ENCODE measurements at regions of chr22 and their contacts with region 1.

Region 1: DNA sequence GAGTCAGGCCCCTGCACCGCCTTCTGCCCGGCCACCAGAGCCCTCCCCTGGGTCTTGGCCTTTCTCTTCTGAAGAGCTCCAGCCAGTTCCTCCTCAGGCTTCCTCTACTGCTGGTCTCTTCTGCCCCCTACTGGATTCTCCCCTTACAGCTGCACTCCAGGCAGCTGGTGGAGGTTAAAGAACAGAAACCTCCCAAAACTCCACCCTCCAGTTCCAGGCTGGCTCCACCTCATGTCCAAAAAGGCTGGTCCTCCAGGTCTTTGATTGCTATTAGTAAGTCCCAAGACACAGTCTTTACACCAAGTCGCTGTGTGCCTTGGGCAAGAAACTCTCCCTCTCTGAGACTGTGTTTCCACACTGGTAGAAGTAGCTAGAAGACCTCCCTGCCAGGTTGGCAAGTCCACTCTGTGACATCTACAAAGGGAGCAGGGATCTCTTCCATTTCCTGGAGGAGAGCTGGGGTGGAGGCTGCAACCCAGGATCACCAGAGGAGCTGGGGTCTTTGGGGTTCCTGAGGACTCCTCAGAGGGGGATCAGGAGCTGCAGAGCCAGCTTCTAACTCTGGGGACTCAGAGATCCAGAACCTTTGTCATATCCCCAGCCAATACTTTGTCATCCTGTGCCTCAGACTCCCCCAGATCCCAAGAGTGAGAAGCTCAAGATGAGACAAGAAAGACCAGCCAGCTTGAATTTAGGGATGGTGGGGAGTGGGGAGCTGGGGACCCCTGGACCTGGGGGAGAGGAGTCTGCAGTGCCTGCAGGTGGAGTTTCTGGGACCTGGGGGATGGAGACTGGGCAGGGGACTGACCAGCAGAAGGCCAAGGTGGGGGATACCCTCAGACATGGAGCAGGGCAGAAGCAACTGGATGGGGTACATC is 3.4 kb upstream of the IGLL5 start:
- DNase-seq: peak; percentile 83
- ATAC-seq: peak; percentile 72
- H3K4me3 Mint-ChIP-seq: no peak overlapping the region
- H3K27ac Mint-ChIP-seq: no peak overlapping the region
- H3K4me1 Mint-ChIP-seq: peaks cover 18% of the 10 kb centered on the region
- H3K27me3 Mint-ChIP-seq: peaks cover 15% of the 10 kb centered on the region
- CTCF ChIP-seq: peak; percentile 78

Region 2: GRCh38 chr22:22748297-22748743 is 135.9 kb before region 1 on chr22:
- CTCF ChIA-PET with region 1: interaction called, 38 read pairs
- POLR2A ChIA-PET with region 1: no interaction called
- intact Hi-C with region 1: loop called (anchors 5 kb)
- DNase-seq: peak; percentile 70
- ATAC-seq: peak; percentile 87
- H3K4me3 Mint-ChIP-seq: no peak overlapping the region
- H3K27ac Mint-ChIP-seq: no peak overlapping the region
- H3K4me1 Mint-ChIP-seq: peaks cover 19% of the 10 kb centered on the region
- H3K27me3 Mint-ChIP-seq: no peaks in the 10 kb centered on the region
- CTCF ChIP-seq: peak; percentile 84

Region 3: DNA sequence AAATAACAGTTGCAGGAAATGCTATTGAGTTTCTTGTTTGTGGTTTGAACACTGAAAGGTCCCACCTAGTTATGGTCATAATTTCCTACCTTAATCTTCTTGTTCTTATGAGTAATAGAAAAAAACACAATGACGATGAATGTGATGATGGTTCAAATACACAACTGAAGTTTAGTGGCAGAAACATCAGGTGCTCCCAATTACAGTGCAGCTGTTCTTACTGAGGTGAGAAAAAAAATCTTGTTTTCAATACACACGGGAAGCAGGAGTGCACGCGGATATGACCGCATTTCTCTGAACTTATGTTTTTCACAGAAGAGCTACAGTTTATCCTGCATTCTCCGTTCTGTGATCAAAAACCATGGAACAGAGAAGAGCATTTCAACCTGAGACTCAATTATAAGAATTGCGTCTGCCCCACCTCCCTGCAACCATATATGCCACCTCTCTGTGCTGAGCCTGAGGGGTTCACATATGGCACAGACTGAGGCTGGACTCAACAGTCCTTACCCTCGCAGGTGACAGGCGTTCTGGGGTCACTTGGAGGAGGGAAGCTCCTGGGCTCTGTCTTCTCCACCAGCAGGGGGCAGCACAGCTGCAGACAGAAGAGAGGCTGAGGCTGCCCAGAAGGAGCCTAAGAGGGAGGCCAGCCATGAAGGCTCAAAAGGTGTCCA is 96.3 kb before region 1 on chr22:
- CTCF ChIA-PET with region 1: interaction called, 72 read pairs
- POLR2A ChIA-PET with region 1: no interaction called
- intact Hi-C with region 1: no loop called
- DNase-seq: peak; percentile 81
- ATAC-seq: peak; percentile 84
- H3K4me3 Mint-ChIP-seq: no peak overlapping the region
- H3K27ac Mint-ChIP-seq: peak overlapping the region; percentile 46
- H3K4me1 Mint-ChIP-seq: peaks cover 34% of the 10 kb centered on the region
- H3K27me3 Mint-ChIP-seq: no peaks in the 10 kb centered on the region
- CTCF ChIP-seq: peak; percentile 89

Region 4: GRCh38 chr22:22818861-22819855 is 65.1 kb before region 1 on chr22:
- CTCF ChIA-PET with region 1: interaction called, 17 read pairs
- POLR2A ChIA-PET with region 1: no interaction called
- intact Hi-C with region 1: no loop called
- DNase-seq: peak; percentile 56
- ATAC-seq: peak; percentile 69
- H3K4me3 Mint-ChIP-seq: no peak overlapping the region
- H3K27ac Mint-ChIP-seq: peak overlapping the region; percentile 70
- H3K4me1 Mint-ChIP-seq: peaks cover 92% of the 10 kb centered on the region
- H3K27me3 Mint-ChIP-seq: no peaks in the 10 kb centered on the region
- CTCF ChIP-seq: no peak

Region 5: GRCh38 chr22:22848364-22848866 is 35.8 kb before region 1 on chr22:
- CTCF ChIA-PET with region 1: interaction called, 122 read pairs
- POLR2A ChIA-PET with region 1: no interaction called
- intact Hi-C with region 1: loop called (anchors 5 kb)
- DNase-seq: peak; percentile 82
- ATAC-seq: peak; percentile 93
- H3K4me3 Mint-ChIP-seq: no peak overlapping the region
- H3K27ac Mint-ChIP-seq: no peak overlapping the region
- H3K4me1 Mint-ChIP-seq: peaks cover 32% of the 10 kb centered on the region
- H3K27me3 Mint-ChIP-seq: no peaks in the 10 kb centered on the region
- CTCF ChIP-seq: peak; percentile 97

Region 6: DNA sequence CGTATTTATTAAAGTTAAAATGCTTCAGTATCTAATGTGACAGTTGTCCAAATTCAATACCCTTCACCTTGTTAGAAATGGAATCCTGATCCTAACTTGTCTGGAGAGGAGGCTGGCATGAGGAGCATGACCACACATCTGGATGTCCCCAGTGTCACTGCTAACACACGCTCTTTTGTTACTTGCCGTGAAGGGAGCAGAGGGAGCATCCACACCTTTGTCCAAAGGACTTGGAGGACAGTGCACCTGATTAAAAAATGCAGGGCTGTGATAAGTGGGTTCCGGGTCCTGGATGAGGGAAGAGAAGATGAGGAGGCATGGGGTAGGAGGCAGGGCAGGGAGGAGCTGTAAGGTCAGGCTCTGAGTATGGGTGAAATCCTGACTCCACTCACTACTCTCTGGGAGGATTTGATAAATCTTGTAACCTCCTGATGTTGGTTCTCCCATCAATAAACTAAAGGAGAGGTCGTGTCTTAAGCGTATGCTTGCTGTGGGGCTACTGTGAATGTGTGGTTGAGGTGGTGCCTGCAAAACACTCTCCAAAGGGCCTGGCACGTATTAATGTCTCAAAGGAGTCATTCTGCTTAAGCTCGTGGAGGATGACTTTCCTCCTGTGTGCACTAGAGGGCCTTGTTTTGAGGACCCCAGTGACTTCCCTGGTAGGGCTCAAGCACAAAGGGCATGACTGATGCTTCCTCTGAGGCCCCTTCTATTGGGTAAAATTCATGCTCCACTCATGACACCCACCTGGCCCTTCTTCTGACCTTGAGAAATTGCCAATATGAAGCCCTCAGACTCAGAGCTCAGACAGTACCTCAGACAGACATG is 13.5 kb before region 1 on chr22:
- CTCF ChIA-PET with region 1: interaction called, 24 read pairs
- POLR2A ChIA-PET with region 1: no interaction called
- intact Hi-C with region 1: no loop called
- DNase-seq: no peak
- ATAC-seq: peak; percentile 51
- H3K4me3 Mint-ChIP-seq: no peak overlapping the region
- H3K27ac Mint-ChIP-seq: no peak overlapping the region
- H3K4me1 Mint-ChIP-seq: peaks cover 14% of the 10 kb centered on the region
- H3K27me3 Mint-ChIP-seq: no peaks in the 10 kb centered on the region
- CTCF ChIP-seq: peak; percentile 32

Region 7: DNA sequence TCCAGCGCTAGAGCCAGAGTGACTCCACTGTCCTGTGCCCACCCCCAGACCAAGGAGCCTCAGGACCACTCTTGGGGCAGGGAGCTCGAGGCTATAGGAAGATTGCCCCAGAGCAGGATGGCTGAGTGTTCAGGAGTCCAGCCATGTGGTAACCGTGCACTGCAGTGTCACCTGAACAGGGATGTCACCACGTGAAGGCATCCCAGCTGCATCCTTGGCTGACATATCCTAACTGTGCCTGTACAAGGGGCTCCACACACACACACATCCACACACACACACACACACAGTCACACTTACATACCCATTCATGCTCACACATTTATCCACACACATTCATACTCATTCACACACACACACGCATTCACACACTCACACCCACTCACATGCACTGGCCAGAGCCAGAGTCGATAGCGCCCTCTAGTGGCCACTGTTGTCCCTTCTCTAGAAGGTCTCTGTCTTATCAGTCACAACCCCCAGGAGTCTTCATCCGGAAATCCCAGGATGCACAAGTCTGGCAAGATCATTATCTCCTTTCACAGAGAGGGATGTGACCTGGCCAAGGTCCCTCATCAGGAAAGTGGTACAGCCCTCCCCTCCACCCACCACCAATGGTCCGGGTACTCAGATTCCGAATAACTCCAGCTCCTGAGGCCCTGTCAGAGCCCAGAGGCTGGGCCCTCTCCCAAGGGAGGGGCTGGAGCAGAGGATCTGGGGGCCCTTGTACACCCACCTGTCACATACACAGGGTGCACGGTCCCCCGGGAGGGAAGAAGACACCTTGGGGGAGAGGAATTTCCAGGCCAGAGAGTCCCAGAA is 58.5 kb after region 1 on chr22:
- CTCF ChIA-PET with region 1: interaction called, 17 read pairs
- POLR2A ChIA-PET with region 1: interaction called, 3 read pairs
- intact Hi-C with region 1: loop called (anchors 5 kb)
- DNase-seq: peak; percentile 91
- ATAC-seq: peak; percentile 83
- H3K4me3 Mint-ChIP-seq: no peak overlapping the region
- H3K27ac Mint-ChIP-seq: no peak overlapping the region
- H3K4me1 Mint-ChIP-seq: peaks cover 6% of the 10 kb centered on the region
- H3K27me3 Mint-ChIP-seq: peaks cover 1% of the 10 kb centered on the region
- CTCF ChIP-seq: peak; percentile 91